Activated T-helper 2 cell treated with anti-CD3 and anti-CD28 coated beads, Interferon-gamma antibody, Interleukin-2, Interleukin-4, amounts not matched to agents 10 μg/mL and 5 μg/mL and 100 μg/mL, durations not matched to agents 14 hours and 24 hours and 36 hours (primary cell): ENCODE measurements at regions of chr2 and their contacts with region 1.

Region 1: DNA sequence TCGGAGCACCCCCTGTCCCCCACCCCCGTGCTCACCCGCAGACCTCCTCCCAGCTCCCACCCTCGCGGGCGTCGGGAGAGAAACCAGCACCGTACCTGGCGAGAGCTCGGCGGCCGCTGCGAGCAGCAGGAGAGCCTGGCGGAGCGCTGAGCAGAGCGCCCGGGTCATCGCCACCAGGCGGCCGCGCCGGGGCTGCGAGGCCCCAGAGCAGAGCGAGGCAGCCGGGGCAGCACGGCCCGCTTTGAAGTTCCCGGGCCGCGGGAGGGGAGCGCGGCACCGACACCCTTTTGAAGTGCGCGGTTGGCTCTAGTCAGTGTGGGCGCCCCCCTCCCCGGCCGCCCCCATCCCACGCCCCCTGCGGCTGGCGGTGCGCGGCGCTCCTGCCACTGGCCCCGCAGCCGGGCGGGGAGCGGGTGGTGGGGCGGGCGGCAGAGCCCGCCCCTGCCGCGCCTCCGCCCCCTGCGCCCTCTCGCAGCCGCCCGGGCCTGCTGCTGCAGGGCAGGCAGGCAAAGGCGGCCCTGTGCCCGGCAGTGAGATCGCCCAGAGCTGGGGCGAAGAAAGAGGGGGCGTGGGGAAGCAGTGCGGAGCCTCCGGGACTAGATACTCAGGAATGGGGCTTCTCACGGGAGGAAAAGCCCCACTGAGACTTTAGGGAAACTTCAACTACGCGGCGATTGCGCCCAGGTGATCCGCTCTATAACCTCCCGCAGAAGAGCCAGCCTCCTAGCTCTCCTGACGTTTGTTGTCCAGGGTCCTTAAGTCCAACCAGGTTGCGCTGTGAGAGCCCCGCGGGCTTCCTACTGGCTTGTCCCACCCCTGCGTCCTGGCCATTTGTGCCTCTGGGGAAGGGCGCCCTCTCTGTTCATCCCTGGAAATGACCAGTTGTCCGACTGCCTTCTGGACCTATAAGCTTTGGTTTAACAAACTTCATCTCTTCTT is at the start of gene ACVR1C:
- DNase-seq: peak; percentile 65
- H3K4me3 Mint-ChIP-seq: peak within 1 kb of the TSS; percentile 83
- H3K27ac Mint-ChIP-seq: no peak within 1 kb of the TSS
- H3K4me1 Mint-ChIP-seq: peaks cover 22% of the 10 kb centered on the region
- H3K27me3 Mint-ChIP-seq: peaks cover 15% of the 10 kb centered on the region
- total RNA-seq, gene ACVR1C: 0.57 and 0.94 TPM in 2 replicates

Region 2: GRCh38 chr2:157413326-157414035 is 215.3 kb before region 1 on chr2:
- intact Hi-C with region 1: loop called (anchors 5 kb)
- DNase-seq: peak; percentile 59
- H3K4me3 Mint-ChIP-seq: peak overlapping the region; percentile 74
- H3K27ac Mint-ChIP-seq: peak overlapping the region; percentile 96
- H3K4me1 Mint-ChIP-seq: peaks cover 74% of the 10 kb centered on the region
- H3K27me3 Mint-ChIP-seq: no peaks in the 10 kb centered on the region

Region 3: GRCh38 chr2:157751462-157752058 is 122.8 kb after region 1 on chr2:
- intact Hi-C with region 1: loop called (anchors 5 kb)
- DNase-seq: no peak
- H3K4me3 Mint-ChIP-seq: no peak overlapping the region
- H3K27ac Mint-ChIP-seq: no peak overlapping the region
- H3K4me1 Mint-ChIP-seq: peaks cover 30% of the 10 kb centered on the region
- H3K27me3 Mint-ChIP-seq: no peaks in the 10 kb centered on the region

Region 4: DNA sequence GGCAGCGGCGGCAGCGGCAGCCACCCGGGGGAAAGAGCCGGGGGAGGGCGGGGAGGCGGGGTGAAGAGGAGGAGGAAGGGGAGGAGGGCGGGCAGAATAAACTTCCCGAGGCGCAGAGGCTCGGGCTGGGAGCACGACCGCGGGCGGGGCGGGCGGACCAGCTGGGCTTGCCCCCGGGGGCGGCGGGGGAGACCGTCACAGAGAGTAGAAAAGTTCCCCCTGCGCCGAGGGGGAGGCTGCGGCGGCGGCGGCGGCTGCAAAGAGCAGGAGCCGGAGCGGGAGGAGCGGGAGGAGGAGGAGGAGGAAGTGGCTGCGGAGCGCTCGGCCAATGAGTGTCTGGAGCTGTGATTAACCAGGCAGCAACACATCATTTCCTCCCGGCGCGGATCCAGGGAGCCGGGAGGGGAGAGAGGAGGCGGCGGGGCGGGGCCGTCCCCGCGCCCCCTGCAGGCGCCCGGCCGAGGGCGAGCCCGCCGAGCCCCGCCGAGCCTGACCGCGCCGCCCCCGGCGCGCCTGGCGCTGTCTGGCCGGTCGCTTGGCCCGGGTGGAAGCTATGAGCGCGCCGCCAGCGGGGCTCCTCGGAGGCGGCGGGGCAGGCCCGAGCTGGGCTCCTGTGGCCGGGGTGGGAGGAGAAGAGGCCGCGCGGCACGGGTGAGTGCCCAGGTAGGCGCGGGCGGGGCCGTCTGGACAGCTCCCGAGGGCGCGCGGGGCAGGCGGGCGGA is 247.5 kb after region 1 on chr2 and contains the start of gene ACVR1:
- intact Hi-C with region 1: loop called (anchors 10 kb)
- DNase-seq: peak; percentile 83
- H3K4me3 Mint-ChIP-seq: peak within 1 kb of the TSS; percentile 85
- H3K27ac Mint-ChIP-seq: peak within 1 kb of the TSS; percentile 86
- H3K4me1 Mint-ChIP-seq: peaks cover 62% of the 10 kb centered on the region
- H3K27me3 Mint-ChIP-seq: no peaks in the 10 kb centered on the region
- total RNA-seq, gene ACVR1: 26.7 and 27.1 TPM in 2 replicates

Region 5: GRCh38 chr2:157938556-157938955 is 309.8 kb after region 1 on chr2:
- intact Hi-C with region 1: no loop called
- DNase-seq: no peak
- H3K4me3 Mint-ChIP-seq: no peak overlapping the region
- H3K27ac Mint-ChIP-seq: peak overlapping the region; percentile 51
- H3K4me1 Mint-ChIP-seq: peaks cover 3% of the 10 kb centered on the region
- H3K27me3 Mint-ChIP-seq: no peaks in the 10 kb centered on the region